A673 (cell line): ENCODE measurements at regions of chr1 and their contacts with region 1.

Region 1: GRCh38 chr1:43763497-43763973 is 56.2 kb downstream of the ST3GAL3 start:
- DNase-seq: peak; percentile 95
- H3K4me3 ChIP-seq: no peak overlapping the region
- H3K27ac ChIP-seq: peak overlapping the region; percentile 72
- H3K4me1 ChIP-seq: peaks cover 69% of the 10 kb centered on the region
- H3K27me3 ChIP-seq: no peaks in the 10 kb centered on the region
- CTCF ChIP-seq: peak; percentile 95

Region 2: GRCh38 chr1:43227143-43227764 is 536.3 kb before region 1 on chr1:
- CTCF ChIA-PET with region 1: interaction called, 8 read pairs
- POLR2A ChIA-PET with region 1: no interaction called
- intact Hi-C with region 1: loop called (anchors 10 kb)
- DNase-seq: peak; percentile 82
- H3K4me3 ChIP-seq: no peak overlapping the region
- H3K27ac ChIP-seq: no peak overlapping the region
- H3K4me1 ChIP-seq: no peaks in the 10 kb centered on the region
- H3K27me3 ChIP-seq: no peaks in the 10 kb centered on the region
- CTCF ChIP-seq: peak; percentile 96

Region 3: GRCh38 chr1:43529206-43529731 is 234.3 kb before region 1 on chr1:
- CTCF ChIA-PET with region 1: no interaction called
- POLR2A ChIA-PET with region 1: interaction called, 4 read pairs
- intact Hi-C with region 1: loop called (anchors 2 kb)
- DNase-seq: peak; percentile 88
- H3K4me3 ChIP-seq: no peak overlapping the region
- H3K27ac ChIP-seq: no peak overlapping the region
- H3K4me1 ChIP-seq: peaks cover 17% of the 10 kb centered on the region
- H3K27me3 ChIP-seq: no peaks in the 10 kb centered on the region
- CTCF ChIP-seq: peak; percentile 97

Region 4: DNA sequence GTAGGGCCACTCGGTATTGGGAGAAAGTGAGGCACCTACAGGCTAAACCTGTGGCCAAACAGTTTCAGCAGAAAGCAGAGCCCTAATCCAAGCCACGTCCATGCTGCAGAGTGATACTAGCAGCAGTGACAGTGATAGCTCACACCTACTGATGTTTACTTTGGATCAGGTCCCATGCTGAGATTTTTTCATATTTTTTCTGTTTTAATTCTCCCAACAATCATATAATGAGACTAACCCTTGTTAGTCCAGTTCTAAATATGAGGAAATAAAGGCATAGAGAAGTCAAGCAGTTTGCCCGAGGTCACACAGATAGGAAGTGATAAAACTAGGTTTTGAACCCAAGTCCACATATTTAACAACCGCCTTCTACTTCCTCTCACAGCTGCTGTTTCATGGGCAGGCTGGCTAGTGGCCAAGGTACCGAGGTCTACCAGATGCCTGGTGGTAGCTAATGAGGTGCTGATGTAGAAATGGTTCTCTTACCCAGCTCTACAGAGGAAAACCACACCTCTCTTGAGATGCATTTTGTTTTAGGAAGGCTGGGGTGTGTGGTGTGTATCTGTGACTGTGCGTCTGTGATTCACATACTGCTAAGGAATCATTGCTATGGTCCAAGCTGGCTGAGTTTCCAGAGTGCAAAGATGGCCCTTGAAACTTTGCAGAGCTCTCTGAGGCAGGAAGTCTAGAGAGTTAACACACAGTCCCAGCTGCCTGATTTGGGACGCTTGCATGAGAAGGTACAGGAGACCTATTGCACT is 89.8 kb after region 1 on chr1:
- CTCF ChIA-PET with region 1: interaction called, 17 read pairs
- POLR2A ChIA-PET with region 1: no interaction called
- intact Hi-C with region 1: loop called (anchors 2 kb)
- DNase-seq: peak; percentile 90
- H3K4me3 ChIP-seq: no peak overlapping the region
- H3K27ac ChIP-seq: peak overlapping the region; percentile 79
- H3K4me1 ChIP-seq: peaks cover 69% of the 10 kb centered on the region
- H3K27me3 ChIP-seq: no peaks in the 10 kb centered on the region
- CTCF ChIP-seq: no peak

Region 5: GRCh38 chr1:43934101-43934985 is 170.8 kb after region 1 on chr1:
- CTCF ChIA-PET with region 1: interaction called, 238 read pairs
- POLR2A ChIA-PET with region 1: interaction called, 9 read pairs
- intact Hi-C with region 1: loop called (anchors 1 kb)
- DNase-seq: peak; percentile 89
- H3K4me3 ChIP-seq: peak overlapping the region; percentile 53
- H3K27ac ChIP-seq: peak overlapping the region; percentile 63
- H3K4me1 ChIP-seq: peaks cover 32% of the 10 kb centered on the region
- H3K27me3 ChIP-seq: no peaks in the 10 kb centered on the region
- CTCF ChIP-seq: peak; percentile 91

Region 6: GRCh38 chr1:43946236-43947060 is 182.9 kb after region 1 on chr1 and contains the start of gene IPO13:
- CTCF ChIA-PET with region 1: interaction called, 10 read pairs
- POLR2A ChIA-PET with region 1: no interaction called
- intact Hi-C with region 1: no loop called
- DNase-seq: peak; percentile 98
- H3K4me3 ChIP-seq: peak within 1 kb of the TSS; percentile 92
- H3K27ac ChIP-seq: peak within 1 kb of the TSS; percentile 99
- H3K4me1 ChIP-seq: peaks cover 19% of the 10 kb centered on the region
- H3K27me3 ChIP-seq: no peaks in the 10 kb centered on the region
- CTCF ChIP-seq: peak; percentile 84
- total RNA-seq, gene IPO13: 44.1 and 53.4 TPM in 2 replicates

Region 7: DNA sequence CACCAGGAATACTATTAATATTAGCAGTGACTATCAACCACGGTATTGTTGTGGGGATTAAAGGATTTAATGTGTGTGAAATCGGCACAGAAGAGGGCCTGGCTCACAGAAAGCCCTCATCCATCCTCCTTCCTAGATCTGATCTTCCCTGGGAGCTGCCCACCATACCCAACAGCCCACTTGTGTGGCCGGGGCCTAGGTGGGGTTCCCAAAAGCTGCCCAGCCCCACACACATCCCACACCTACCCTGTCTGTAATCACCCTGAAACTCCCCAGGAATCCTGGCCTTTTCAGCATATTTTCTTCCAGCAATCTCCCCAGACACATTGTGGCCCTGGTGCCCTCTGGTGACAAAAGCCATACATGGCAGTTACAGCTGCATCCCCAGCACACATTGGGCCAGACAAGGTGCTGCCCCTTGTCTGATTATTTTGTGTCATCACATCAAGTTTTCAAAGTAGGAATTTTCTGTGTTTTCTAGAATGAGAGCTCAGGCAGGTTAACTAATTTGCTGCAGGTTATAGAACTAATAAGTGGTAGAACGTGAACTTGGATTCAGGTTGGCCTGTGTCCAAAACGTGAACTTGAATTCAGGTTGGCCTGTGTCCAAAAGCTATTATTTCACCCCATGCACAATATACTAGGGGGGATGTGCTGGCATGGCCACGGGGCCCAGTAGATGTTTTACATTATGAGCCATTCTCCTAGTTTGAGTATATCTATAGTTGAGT is 273.0 kb after region 1 on chr1:
- CTCF ChIA-PET with region 1: interaction called, 14 read pairs
- POLR2A ChIA-PET with region 1: no interaction called
- intact Hi-C with region 1: loop called (anchors 5 kb)
- DNase-seq: peak; percentile 87
- H3K4me3 ChIP-seq: no peak overlapping the region
- H3K27ac ChIP-seq: peak overlapping the region; percentile 28
- H3K4me1 ChIP-seq: peaks cover 26% of the 10 kb centered on the region
- H3K27me3 ChIP-seq: no peaks in the 10 kb centered on the region
- CTCF ChIP-seq: peak; percentile 93